CD4-positive, alpha-beta memory T cell (primary cell): ENCODE measurements at regions of chr3 and their contacts with region 1.

Region 1: DNA sequence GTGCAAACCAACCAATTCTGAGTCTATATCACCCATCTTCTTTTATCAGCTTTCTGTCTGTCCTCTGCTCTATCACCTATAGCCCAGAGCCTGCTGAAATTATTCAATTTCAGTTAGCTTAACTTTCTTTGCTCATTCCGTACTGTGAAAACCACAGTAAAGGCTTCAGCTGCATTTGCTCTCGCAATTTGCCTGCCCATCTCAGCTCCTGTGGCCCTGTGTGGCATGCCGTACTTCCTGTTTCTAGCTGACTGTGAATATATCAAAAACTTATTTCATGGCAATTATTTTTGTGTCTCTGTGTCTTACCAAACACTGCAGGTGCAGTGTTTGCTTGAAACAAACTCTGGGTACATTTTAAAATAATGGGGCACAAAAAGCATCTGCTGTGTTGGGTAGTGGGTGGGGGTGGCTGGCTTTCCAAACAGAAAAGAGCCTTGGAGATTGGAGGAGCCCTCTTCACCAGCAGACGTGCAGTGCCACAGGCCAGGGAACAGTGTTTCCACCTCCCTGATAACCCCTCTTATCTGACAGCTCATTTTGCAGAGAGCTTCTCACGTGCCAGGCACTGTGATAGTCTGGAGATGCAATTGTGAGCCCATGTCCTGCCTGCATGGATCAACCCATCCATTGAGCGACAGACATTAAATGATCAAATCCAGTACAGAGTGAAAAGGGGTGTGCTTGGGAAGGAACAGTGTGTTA is 45.2 kb downstream of the GASK1A start:
- DNase-seq: peak; percentile 66 to 70 (median 68)
- H3K4me3 ChIP-seq: peak overlapping the region in 1 of 2 donors; percentile 41
- H3K4me3 Mint-ChIP-seq: peak overlapping the region; percentile 65 to 92 (median 75)
- H3K27ac ChIP-seq: peak overlapping the region; percentile 35
- H3K27ac Mint-ChIP-seq: peak overlapping the region; percentile 57 to 95 (median 91)
- H3K4me1 ChIP-seq: peaks cover 70% of the 10 kb centered on the region
- H3K4me1 Mint-ChIP-seq: peaks cover 56 to 74% (median 65%) of the 10 kb centered on the region in 4 donors
- H3K27me3 ChIP-seq: no peaks in the 10 kb centered on the region
- H3K27me3 Mint-ChIP-seq: no peaks in the 10 kb centered on the region

Region 2: DNA sequence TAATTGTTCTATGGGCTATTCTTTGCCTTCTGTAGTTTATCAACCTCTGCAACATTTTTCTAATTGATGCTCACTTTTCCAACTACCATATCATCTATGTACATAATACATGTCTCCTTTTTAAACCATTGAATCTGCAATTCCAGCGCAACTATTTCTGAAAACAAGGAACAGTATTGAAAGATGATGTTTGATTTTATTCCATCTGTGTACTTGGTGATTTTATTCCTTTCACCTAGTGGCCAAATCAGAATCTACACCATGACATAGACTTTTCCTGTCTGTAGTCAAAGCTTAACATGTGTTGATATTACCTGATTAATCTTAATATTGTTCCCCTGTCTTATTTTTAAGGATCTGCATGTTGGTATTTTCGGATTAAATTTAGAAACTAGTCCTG is 410.9 kb before region 1 on chr3:
- CTCF ChIA-PET with region 1: no interaction called
- POLR2A ChIA-PET with region 1: no interaction called
- intact Hi-C with region 1: no loop called
- DNase-seq: no peak
- H3K4me3 ChIP-seq: no peak overlapping the region
- H3K4me3 Mint-ChIP-seq: peak overlapping the region in 4 of 8 donors; percentile 0 to 14 (median 2)
- H3K27ac ChIP-seq: no peak overlapping the region
- H3K27ac Mint-ChIP-seq: peak overlapping the region in 6 of 7 donors; percentile 0 to 93 (median 46)
- H3K4me1 ChIP-seq: peaks cover 54% of the 10 kb centered on the region
- H3K4me1 Mint-ChIP-seq: peaks cover 39 to 73% (median 54%) of the 10 kb centered on the region in 4 donors
- H3K27me3 ChIP-seq: no peaks in the 10 kb centered on the region
- H3K27me3 Mint-ChIP-seq: no peaks in the 10 kb centered on the region

Region 3: DNA sequence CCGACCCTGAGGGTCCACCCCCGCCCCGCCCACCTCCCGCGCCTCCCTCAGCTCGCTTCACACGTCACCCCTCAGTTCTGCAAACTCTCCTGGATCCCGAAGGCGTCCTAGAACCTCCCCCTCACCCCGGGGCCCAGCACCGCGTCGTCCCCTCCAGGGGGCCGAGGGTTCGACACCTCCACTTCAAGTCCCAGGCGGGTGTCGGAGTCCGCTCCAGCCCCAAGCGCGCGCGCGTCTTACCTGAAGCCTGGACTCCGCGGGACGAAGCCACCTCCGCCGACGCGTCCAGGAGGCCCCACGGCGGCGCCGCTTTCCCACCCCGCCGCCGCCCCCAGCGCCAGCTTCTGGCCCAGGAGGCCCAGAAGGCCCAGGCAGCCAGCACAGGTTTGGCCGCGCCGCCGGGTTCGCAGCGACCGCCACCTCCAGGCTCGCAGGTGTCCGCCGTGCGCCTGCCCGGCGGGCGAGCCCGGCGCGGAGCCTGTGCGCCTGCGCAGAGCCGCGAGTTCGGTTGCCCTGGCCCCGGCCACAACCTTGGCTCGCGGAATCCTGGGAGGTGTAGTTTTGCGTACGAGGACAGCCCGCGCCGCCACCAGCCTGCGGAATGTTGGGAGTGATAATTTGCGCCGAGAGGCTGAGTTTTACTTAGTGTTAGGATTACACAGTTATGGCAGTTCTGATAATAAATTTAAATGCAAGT is 81.4 kb after region 1 on chr3 and contains the start of gene POMGNT2:
- CTCF ChIA-PET with region 1: interaction called, 4 read pairs
- POLR2A ChIA-PET with region 1: interaction called, 4 read pairs
- intact Hi-C with region 1: loop called (anchors 5 kb)
- DNase-seq: peak; percentile 82 to 88 (median 87)
- H3K4me3 ChIP-seq: peak within 1 kb of the TSS; percentile 12 to 61
- H3K4me3 Mint-ChIP-seq: peak within 1 kb of the TSS; percentile 82 to 88 (median 84)
- H3K27ac ChIP-seq: peak within 1 kb of the TSS; percentile 58
- H3K27ac Mint-ChIP-seq: peak within 1 kb of the TSS; percentile 24 to 75 (median 65)
- H3K4me1 ChIP-seq: peaks cover 21% of the 10 kb centered on the region
- H3K4me1 Mint-ChIP-seq: peaks cover 11 to 22% (median 14%) of the 10 kb centered on the region in 4 donors
- H3K27me3 ChIP-seq: no peaks in the 10 kb centered on the region
- H3K27me3 Mint-ChIP-seq: peaks cover 0 to 2% of the 10 kb centered on the region in 2 donors
- total RNA-seq, gene POMGNT2: 5.4 TPM

Region 4: DNA sequence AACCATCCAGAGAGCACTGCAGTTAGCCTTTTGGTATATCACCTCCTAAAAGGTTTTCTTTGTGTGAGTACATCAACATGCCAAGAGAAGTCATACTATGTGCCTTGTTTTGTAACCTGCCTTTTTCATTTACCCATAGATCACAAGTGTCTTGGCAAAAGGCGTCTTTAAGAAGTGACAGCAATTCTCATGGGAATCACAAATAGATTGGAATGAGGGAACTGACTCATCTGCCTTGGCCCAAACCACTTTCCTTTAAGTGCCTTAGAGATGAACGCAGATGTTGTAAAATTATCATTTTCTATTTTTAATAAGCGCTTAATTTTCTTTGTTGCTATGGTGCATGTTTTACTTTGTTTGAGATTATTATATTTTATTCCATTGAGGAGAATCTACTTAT is 102.2 kb after region 1 on chr3:
- CTCF ChIA-PET with region 1: no interaction called
- POLR2A ChIA-PET with region 1: no interaction called
- intact Hi-C with region 1: no loop called
- DNase-seq: no peak
- H3K4me3 ChIP-seq: no peak overlapping the region
- H3K4me3 Mint-ChIP-seq: no peak overlapping the region
- H3K27ac ChIP-seq: no peak overlapping the region
- H3K27ac Mint-ChIP-seq: no peak overlapping the region
- H3K4me1 ChIP-seq: no peaks in the 10 kb centered on the region
- H3K4me1 Mint-ChIP-seq: no peaks in the 10 kb centered on the region
- H3K27me3 ChIP-seq: no peaks in the 10 kb centered on the region
- H3K27me3 Mint-ChIP-seq: peaks cover 1 to 9% of the 10 kb centered on the region in 2 donors